ENCODE measurements at regions of chr3 and their contacts with region 1.

Region 1: GRCh38 chr3:146326670-146327543 is 76.0 kb upstream of the PLSCR4 start:
- DNase-seq: peak; percentile 85
- H3K4me3 ChIP-seq: no peak overlapping the region
- H3K27ac ChIP-seq: no peak overlapping the region
- H3K4me1 ChIP-seq: peaks cover 2% of the 10 kb centered on the region
- H3K27me3 ChIP-seq: no peaks in the 10 kb centered on the region
- CTCF ChIP-seq: peak; percentile 49 to 52
- POLR2A ChIP-seq: no peak

Region 2: DNA sequence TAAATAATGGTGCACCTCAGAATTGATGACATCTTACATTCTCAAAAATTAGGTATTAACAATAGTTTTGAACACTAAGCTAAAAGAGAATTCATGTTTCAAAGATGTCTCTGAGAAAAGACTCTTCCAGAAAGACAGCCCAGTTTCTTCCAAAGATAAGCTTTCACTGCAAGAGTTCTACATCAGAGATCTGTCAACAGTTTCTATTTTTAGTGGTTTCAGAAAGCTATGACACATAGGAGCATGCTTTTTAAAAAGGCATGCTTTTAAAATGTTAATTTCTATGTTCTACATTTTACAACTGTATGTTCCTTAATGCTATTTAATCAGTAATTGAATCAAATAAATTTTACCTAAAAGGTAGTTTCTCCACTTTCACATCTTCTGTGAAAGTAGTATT is 254.1 kb before region 1 on chr3:
- CTCF ChIA-PET with region 1: interaction called, 10 read pairs
- POLR2A ChIA-PET with region 1: no interaction called
- dilution Hi-C with region 1: no loop called
- intact Hi-C with region 1: no loop called
- DNase-seq: no peak
- H3K4me3 ChIP-seq: no peak overlapping the region
- H3K27ac ChIP-seq: no peak overlapping the region
- H3K4me1 ChIP-seq: no peaks in the 10 kb centered on the region
- H3K27me3 ChIP-seq: no peaks in the 10 kb centered on the region
- CTCF ChIP-seq: no peak
- POLR2A ChIP-seq: no peak

Region 3: DNA sequence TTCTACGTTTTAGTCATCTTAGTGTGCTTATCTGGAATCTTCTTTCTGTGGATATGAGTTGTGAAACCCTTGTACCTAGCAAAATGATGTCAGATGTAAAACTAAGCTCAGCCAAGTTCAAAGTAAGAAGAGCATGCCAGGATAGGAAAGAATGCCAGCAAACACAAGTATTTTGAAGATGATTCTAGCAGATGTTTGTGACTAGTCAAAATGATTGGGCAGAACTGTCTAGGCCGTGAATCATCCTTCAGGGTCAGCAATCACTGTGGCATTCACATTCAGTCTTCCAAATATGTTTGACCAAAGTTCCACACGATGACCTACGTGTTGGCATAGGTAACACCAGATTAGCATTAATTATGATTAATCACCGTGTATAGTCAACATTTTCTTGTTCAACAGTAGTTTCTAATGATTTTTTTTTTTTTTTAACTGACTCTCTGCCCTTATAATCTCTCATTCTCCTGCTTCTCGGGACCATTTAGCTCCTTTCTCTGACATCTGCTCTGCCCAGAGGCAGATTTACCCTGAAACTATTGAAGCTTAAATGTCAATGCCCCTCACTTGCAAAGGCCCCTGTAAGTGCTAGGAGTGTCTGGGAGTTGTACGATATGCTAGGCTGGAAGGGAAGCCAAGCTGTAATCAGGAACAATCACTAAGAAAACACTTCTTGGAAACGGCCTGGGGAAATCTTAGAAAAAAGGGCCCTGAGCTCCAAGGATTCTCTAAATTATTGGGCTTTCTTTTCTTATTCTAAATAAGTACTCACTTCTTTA is 160.3 kb before region 1 on chr3:
- CTCF ChIA-PET with region 1: interaction called, 11 read pairs
- POLR2A ChIA-PET with region 1: interaction called, 3 read pairs
- dilution Hi-C with region 1: no loop called
- intact Hi-C with region 1: no loop called
- DNase-seq: peak; percentile 67
- H3K4me3 ChIP-seq: no peak overlapping the region
- H3K27ac ChIP-seq: peak overlapping the region; percentile 65
- H3K4me1 ChIP-seq: peaks cover 57% of the 10 kb centered on the region
- H3K27me3 ChIP-seq: no peaks in the 10 kb centered on the region
- CTCF ChIP-seq: no peak
- POLR2A ChIP-seq: no peak

Region 4: DNA sequence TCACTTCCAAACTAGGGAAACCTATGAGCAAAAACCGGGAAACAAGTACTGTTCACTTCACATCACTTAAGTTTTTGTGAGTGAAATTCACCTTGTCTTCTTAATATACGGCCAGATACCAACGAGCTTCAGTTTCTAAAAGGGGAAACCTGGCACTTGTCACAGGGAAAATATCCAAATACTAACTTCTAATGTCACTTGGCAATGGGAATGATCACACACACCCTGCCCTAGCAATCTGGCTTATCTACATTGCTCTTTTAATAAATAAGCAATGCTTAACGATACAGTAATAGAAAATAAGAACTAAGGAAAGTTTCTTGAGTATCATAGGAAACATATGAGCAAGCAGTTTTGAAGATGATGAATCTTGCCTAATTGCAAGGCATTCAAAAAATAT is 131.3 kb before region 1 on chr3:
- CTCF ChIA-PET with region 1: interaction called, 347 read pairs
- POLR2A ChIA-PET with region 1: interaction called, 4 read pairs
- dilution Hi-C with region 1: no loop called
- intact Hi-C with region 1: no loop called
- DNase-seq: no peak
- H3K4me3 ChIP-seq: no peak overlapping the region
- H3K27ac ChIP-seq: peak overlapping the region; percentile 81
- H3K4me1 ChIP-seq: peaks cover 45% of the 10 kb centered on the region
- H3K27me3 ChIP-seq: no peaks in the 10 kb centered on the region
- CTCF ChIP-seq: no peak
- POLR2A ChIP-seq: no peak

Region 5: DNA sequence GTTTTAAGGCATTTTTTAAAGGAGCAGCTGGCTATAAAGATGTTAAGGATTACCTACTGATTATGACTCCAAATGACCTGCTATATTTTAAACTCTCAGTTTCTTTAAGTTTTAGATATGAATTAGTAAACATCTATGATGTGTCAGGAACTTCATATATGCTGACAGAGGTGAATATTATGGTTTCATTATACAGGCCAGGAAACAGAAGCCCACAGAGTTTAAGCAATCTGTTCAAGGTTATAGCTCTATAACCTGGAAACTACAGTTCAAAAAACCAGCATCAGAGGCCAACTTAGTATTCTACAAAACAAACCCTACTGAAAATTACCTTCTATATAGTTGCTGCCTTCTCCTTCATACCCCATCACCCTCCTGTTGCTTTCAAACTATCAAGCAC is 93.4 kb before region 1 on chr3:
- CTCF ChIA-PET with region 1: interaction called, 22 read pairs
- POLR2A ChIA-PET with region 1: no interaction called
- dilution Hi-C with region 1: no loop called
- intact Hi-C with region 1: no loop called
- DNase-seq: no peak
- H3K4me3 ChIP-seq: no peak overlapping the region
- H3K27ac ChIP-seq: no peak overlapping the region
- H3K4me1 ChIP-seq: no peaks in the 10 kb centered on the region
- H3K27me3 ChIP-seq: no peaks in the 10 kb centered on the region
- CTCF ChIP-seq: no peak
- POLR2A ChIP-seq: no peak

Region 6: GRCh38 chr3:146277953-146278631 is 48.8 kb before region 1 on chr3:
- CTCF ChIA-PET with region 1: interaction called, 29 read pairs
- POLR2A ChIA-PET with region 1: interaction called, 3 read pairs
- dilution Hi-C with region 1: no loop called
- intact Hi-C with region 1: loop called (anchors 1 kb)
- DNase-seq: peak; percentile 97
- H3K4me3 ChIP-seq: no peak overlapping the region
- H3K27ac ChIP-seq: peak overlapping the region; percentile 89
- H3K4me1 ChIP-seq: peaks cover 57% of the 10 kb centered on the region
- H3K27me3 ChIP-seq: no peaks in the 10 kb centered on the region
- CTCF ChIP-seq: no peak
- POLR2A ChIP-seq: peak; percentile 66

Region 7: GRCh38 chr3:146577662-146578061 is 250.8 kb after region 1 on chr3:
- CTCF ChIA-PET with region 1: interaction called, 98 read pairs
- POLR2A ChIA-PET with region 1: no interaction called
- dilution Hi-C with region 1: no loop called
- intact Hi-C with region 1: loop called (anchors 2 kb)
- DNase-seq: peak; percentile 76
- H3K4me3 ChIP-seq: no peak overlapping the region
- H3K27ac ChIP-seq: no peak overlapping the region
- H3K4me1 ChIP-seq: no peaks in the 10 kb centered on the region
- H3K27me3 ChIP-seq: no peaks in the 10 kb centered on the region
- CTCF ChIP-seq: peak in 1 of 2 donors; percentile 8
- POLR2A ChIP-seq: no peak

Measured in endothelial cell of umbilical vein (primary cell).